ENCODE measurements at regions of chr1 and their contacts with region 1.

Region 1: GRCh38 chr1:154463512-154463990 is 38.5 kb upstream of the TDRD10 start:
- DNase-seq: peak; percentile 46
- ATAC-seq: peak; percentile 42
- H3K4me3 ChIP-seq: no peak overlapping the region
- H3K27ac ChIP-seq: no peak overlapping the region
- H3K4me1 ChIP-seq: peaks cover 20% of the 10 kb centered on the region
- H3K27me3 ChIP-seq: no peaks in the 10 kb centered on the region
- CTCF ChIP-seq: no peak
- EP300 ChIP-seq: no peak
- POLR2A ChIP-seq: no peak
- RAD21 ChIP-seq: no peak

Region 2: GRCh38 chr1:154352581-154353459 is 110.7 kb before region 1 on chr1:
- CTCF ChIA-PET with region 1: interaction called, 9 read pairs
- POLR2A ChIA-PET with region 1: no interaction called
- RAD21 ChIA-PET with region 1: interaction called, 9 read pairs
- SMC1A ChIA-PET with region 1: interaction called, 14 read pairs
- in situ Hi-C with region 1: no loop called
- intact Hi-C with region 1: loop called (anchors 5 kb)
- DNase-seq: no peak
- ATAC-seq: peak; percentile 77
- H3K4me3 ChIP-seq: peak overlapping the region; percentile 18; the same call in 1 of the 2 replicates
- H3K27ac ChIP-seq: no peak overlapping the region
- H3K4me1 ChIP-seq: peaks cover 10% of the 10 kb centered on the region
- H3K27me3 ChIP-seq: peaks cover 0 to 5% of the 10 kb centered on the region in 2 experiments; a peak in 2 of 4 replicates
- CTCF ChIP-seq: peak in 1 of 3 experiments; percentile 48; a peak in 2 of 6 replicates
- EP300 ChIP-seq: no peak
- POLR2A ChIP-seq: no peak
- RAD21 ChIP-seq: peak; percentile 22; the same call in 1 of the 2 replicates

Region 3: DNA sequence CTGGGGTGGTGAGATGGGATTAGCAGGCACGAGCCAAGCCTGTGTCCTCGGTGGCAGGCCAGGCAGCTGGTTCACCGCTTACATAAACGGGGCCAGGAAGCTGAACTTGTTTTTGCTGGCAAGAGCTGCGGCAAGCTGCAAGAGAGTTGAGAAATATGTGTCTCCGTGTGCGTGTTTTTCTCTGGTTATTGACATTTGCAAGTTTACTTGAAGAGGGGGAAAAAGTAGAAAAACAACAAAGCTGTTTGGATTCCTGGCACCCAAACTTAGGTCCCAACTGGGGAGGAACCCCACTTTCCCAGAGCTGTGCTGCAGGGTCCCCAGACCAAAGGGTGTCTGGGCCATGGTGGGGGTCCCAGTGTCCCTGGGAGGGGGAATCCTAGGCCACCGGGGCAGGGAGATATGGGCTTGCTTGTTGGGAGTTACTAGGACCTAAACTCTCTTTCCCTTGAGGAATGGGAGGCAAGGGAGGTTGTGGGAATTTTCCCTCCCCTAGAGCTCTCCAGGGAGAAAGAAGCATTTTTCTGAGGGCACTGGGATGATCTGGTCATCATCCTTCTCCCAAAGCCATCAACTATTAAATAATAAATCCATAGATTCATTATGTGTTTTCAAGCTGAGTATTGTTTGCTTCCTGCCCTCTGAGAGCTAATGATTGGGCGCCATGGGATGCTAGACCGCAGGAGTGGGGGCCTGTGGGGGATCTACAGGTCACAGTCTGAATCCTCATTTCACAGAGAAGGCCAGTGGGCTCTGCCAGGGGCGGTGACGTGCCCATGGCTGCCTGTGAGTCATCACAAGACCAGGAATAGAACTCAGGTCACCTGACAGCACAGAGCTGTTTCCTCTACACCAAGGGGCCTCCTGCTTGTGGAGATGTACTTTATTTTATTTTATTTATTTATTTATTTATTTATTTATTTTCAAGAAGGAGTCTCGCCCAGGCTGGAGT is 43.7 kb before region 1 on chr1:
- CTCF ChIA-PET with region 1: interaction called, 6 read pairs
- POLR2A ChIA-PET with region 1: no interaction called
- RAD21 ChIA-PET with region 1: interaction called, 5 read pairs
- SMC1A ChIA-PET with region 1: interaction called, 19 read pairs
- in situ Hi-C with region 1: no loop called
- intact Hi-C with region 1: no loop called
- DNase-seq: no peak
- ATAC-seq: peak; percentile 85
- H3K4me3 ChIP-seq: no peak overlapping the region
- H3K27ac ChIP-seq: peak overlapping the region; percentile 2; the same call in 1 of the 2 replicates
- H3K4me1 ChIP-seq: peaks cover 26% of the 10 kb centered on the region
- H3K27me3 ChIP-seq: no peaks in the 10 kb centered on the region
- CTCF ChIP-seq: no peak
- EP300 ChIP-seq: no peak
- POLR2A ChIP-seq: no peak
- RAD21 ChIP-seq: no peak

Region 4: GRCh38 chr1:154442006-154442740 is 21.4 kb before region 1 on chr1:
- CTCF ChIA-PET with region 1: interaction called, 19 read pairs
- POLR2A ChIA-PET with region 1: interaction called, 9 read pairs
- RAD21 ChIA-PET with region 1: interaction called, 16 read pairs
- SMC1A ChIA-PET with region 1: interaction called, 15 read pairs
- in situ Hi-C with region 1: no loop called
- intact Hi-C with region 1: loop called (anchors 2 kb)
- DNase-seq: no peak
- ATAC-seq: no peak
- H3K4me3 ChIP-seq: no peak overlapping the region
- H3K27ac ChIP-seq: no peak overlapping the region
- H3K4me1 ChIP-seq: peaks cover 43% of the 10 kb centered on the region
- H3K27me3 ChIP-seq: no peaks in the 10 kb centered on the region
- CTCF ChIP-seq: peak; percentile 31 to 57 (median 45)
- EP300 ChIP-seq: no peak
- POLR2A ChIP-seq: no peak
- RAD21 ChIP-seq: peak; percentile 29; the same call in 1 of the 2 replicates

Region 5: DNA sequence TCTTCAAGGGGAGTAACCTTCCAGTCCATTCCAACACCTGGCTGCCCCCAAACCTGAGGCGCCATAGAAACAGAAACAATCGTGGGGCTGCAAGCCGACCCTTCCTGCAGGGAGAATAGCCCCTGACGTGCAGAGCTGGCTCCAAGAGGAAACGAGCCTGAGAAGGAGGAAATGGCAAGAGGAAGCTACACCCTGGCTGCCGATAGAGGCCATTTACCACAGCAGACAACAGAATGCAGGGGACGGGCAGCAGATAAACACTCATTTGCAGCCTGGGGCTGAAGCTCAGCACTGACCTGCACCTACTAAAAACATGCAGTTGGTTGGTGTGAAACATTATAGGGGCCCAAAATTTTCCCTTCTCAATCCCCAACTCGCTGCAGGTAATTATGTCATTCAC is 29.7 kb after region 1 on chr1:
- CTCF ChIA-PET with region 1: interaction called, 13 read pairs
- POLR2A ChIA-PET with region 1: interaction called, 3 read pairs
- RAD21 ChIA-PET with region 1: interaction called, 12 read pairs
- SMC1A ChIA-PET with region 1: interaction called, 7 read pairs
- in situ Hi-C with region 1: no loop called
- intact Hi-C with region 1: no loop called
- DNase-seq: no peak
- ATAC-seq: peak; percentile 47
- H3K4me3 ChIP-seq: no peak overlapping the region
- H3K27ac ChIP-seq: no peak overlapping the region; the same call in 1 of the 2 replicates
- H3K4me1 ChIP-seq: peaks cover 45% of the 10 kb centered on the region
- H3K27me3 ChIP-seq: no peaks in the 10 kb centered on the region
- CTCF ChIP-seq: no peak
- EP300 ChIP-seq: no peak
- POLR2A ChIP-seq: no peak
- RAD21 ChIP-seq: no peak

Region 6: DNA sequence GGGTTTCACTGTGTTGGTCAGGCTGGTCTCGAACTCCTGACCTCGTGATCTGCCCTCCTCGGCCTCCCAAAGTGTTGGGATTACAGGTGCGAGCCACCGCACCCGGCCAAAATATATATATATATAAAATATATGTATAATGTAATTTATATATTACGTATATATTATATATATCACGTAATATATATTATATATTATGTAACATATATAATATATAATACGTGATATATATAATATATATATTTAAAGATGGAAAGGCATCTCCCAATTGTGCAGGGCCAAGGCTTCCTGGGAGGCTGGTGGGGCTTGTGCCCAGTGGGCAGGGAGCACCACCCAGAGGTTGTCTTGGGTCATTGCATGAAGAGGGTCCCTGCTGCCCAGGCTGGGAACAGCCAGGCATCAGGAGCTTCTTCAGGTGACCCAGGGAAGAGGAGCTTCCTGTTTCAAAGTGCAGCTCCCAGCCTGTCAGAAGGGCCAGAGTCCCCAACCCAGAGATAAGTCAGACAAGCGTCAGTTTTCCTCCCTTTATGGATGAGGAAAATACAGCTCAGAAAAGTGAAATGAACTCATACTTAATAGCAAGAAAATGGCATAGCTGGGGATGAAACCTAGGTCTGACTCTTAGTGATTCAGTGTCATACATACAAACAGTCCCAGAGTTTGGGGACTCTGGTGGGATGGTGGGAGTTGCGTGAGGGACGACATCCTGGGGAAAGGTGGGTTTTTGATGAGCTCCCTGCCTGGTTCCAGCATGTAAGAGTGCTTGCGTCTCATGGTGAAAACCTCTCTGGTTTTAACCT is 82.9 kb after region 1 on chr1:
- CTCF ChIA-PET with region 1: interaction called, 22 read pairs
- POLR2A ChIA-PET with region 1: no interaction called
- RAD21 ChIA-PET with region 1: interaction called, 13 read pairs
- SMC1A ChIA-PET with region 1: interaction called, 3 read pairs
- in situ Hi-C with region 1: no loop called
- intact Hi-C with region 1: no loop called
- DNase-seq: peak; percentile 13
- ATAC-seq: peak; percentile 87
- H3K4me3 ChIP-seq: no peak overlapping the region
- H3K27ac ChIP-seq: no peak overlapping the region
- H3K4me1 ChIP-seq: peaks cover 15% of the 10 kb centered on the region
- H3K27me3 ChIP-seq: no peaks in the 10 kb centered on the region; a peak in 1 of 4 replicates
- CTCF ChIP-seq: peak; percentile 72 to 86 (median 84)
- EP300 ChIP-seq: no peak
- POLR2A ChIP-seq: no peak
- RAD21 ChIP-seq: peak; percentile 98

Region 7: GRCh38 chr1:154657556-154657955 is 194.0 kb after region 1 on chr1:
- CTCF ChIA-PET with region 1: no interaction called
- POLR2A ChIA-PET with region 1: no interaction called
- RAD21 ChIA-PET with region 1: no interaction called
- SMC1A ChIA-PET with region 1: no interaction called
- in situ Hi-C with region 1: no loop called
- intact Hi-C with region 1: no loop called
- DNase-seq: no peak
- ATAC-seq: no peak
- H3K4me3 ChIP-seq: no peak overlapping the region
- H3K27ac ChIP-seq: no peak overlapping the region
- H3K4me1 ChIP-seq: no peaks in the 10 kb centered on the region
- H3K27me3 ChIP-seq: no peaks in the 10 kb centered on the region; a peak in 1 of 4 replicates
- CTCF ChIP-seq: no peak
- EP300 ChIP-seq: no peak
- POLR2A ChIP-seq: no peak
- RAD21 ChIP-seq: no peak

Measured in GM12878 (cell line).